ENCODE measurements at regions of chr1 and their contacts with region 1.

Region 1: DNA sequence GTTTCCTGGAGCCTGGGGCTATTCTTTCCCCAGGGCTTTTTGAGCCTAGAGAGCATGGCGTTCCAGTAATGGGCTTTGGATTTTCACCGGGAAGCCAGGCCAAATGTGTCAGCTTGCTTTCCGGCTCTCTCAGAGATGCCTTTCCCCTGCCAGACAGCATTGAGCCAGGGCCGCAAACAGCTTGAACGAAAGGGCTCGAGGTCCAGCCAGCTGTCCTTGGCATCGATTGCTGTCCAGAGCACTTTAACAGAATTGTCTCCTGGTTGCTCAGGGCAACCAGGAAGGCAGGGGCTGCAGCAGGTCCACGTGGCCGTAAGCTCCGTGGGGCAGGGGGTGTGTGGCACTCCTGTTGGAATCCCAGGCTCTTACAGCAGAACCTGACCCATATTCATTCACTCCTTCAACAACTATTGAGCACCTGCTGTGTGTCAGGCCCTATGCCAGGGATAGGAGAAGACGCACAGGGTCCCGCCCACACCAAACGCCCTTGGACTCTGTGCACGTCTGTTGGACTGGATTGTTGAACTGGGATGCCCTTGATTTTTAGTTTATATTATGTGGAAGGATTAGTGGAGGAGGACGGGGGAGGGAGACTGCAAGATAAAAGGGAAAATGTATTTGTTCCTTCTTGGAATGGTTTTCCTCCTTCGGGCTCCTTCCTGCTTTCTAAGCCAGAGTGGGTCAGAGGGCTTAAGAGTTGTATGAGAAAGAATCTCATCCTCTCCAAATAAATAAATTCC is 38.7 kb upstream of the EFHD2 start:
- DNase-seq: no peak

Region 2: GRCh38 chr1:15328351-15329103 is 42.4 kb before region 1 on chr1:
- intact Hi-C with region 1: loop called (anchors 5 kb)
- DNase-seq: no peak

Region 3: DNA sequence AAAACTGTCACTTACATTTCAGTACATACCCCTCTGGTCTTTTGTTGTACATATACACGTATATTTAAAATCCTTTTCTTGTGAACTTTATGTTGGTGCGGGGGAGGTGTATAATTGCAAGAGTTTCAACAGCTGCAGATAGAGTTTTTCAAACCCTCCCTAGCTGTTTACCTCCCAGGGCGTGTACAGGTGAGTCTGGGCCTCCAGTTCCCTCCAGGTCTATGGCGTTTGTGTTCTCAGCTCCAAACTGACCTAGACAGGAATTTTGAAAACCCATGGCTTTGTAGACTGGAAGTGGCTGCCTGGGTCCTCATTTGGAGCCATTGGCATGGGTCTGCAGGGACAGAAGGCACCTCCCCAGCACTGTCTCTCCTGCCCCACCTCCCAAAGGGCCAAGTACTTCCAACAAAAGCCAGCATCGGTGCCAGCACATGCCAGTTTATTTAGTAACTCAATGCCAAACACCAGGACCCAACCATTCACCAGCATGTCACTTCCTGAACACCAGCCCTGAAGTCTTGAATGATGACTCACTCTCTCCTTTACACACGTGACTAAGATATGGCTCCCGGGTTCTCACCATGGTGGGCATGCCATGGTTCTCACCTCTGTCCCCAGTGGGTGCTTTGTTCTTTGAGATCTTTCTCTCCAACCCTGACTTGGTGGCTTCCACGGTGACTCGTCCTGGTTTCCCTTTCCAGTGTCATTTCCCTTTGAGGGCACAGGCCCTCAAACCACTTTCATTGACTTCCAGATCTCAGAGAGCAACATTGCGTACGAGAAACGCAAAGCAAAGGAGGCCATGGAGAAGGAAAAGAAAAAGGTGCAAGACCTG is 18.6 kb before region 1 on chr1:
- intact Hi-C with region 1: no loop called
- DNase-seq: no peak

Region 4: GRCh38 chr1:15810073-15810472 is 439.1 kb after region 1 on chr1:
- intact Hi-C with region 1: no loop called
- DNase-seq: no peak

Measured in cardiac septum (tissue), 1 donor.